A549 (cell line): ENCODE measurements at regions of chr4 and their contacts with region 1.

Region 1: DNA sequence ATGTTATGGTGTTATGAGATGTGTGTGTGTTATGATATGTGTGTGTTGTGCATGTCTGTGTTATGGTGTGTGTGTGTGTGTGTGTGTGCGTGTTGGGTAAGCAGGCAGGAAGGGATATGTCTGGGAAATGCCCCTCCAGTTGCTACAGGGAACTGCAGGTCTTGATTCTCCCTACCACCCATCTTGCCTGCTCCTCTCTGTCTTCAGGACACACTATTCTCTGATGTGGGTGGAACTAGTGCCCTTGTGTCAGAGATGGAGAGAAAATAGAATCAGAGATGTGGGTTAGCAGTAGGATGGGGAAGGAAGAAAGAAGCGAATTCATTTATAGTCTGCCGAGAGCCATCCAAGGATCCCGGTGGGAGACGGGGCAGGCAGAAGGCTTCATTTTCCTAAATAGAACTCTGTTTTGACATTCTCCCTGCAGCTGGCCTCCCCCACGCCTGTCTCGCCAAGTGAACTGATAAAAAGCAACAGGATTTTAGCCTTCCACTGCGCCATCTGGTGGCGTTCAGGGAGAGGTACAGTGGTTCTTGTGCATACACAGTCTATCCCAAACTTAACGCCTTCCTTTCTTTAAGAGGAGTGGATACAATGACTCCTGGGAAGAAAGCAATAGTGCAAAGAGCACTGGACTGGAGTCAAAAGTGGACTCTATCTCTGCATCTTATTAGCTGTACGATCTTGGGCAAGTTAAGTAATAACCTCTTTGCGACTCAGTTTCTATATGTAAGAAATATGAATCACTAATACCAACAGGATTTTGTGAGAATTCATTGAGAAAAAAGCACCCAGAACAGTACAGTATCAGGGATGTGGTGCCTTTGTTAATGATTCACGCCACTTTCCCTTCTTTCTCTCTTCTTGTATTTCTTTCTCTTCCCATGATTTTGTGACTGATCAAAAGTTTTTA is 14.1 kb upstream of the MGST2 start:
- DNase-seq: peak; percentile 44 to 84
- ATAC-seq: peak; percentile 82 to 85
- H3K4me3 ChIP-seq: no peak overlapping the region
- H3K27ac ChIP-seq: peak overlapping the region; percentile 63 to 81
- H3K4me1 ChIP-seq: peaks cover 29% of the 10 kb centered on the region
- CTCF ChIP-seq: peak; percentile 80
- EP300 ChIP-seq: no peak
- POLR2A ChIP-seq: no peak
- RAD21 ChIP-seq: peak; percentile 75 to 79

Region 2: DNA sequence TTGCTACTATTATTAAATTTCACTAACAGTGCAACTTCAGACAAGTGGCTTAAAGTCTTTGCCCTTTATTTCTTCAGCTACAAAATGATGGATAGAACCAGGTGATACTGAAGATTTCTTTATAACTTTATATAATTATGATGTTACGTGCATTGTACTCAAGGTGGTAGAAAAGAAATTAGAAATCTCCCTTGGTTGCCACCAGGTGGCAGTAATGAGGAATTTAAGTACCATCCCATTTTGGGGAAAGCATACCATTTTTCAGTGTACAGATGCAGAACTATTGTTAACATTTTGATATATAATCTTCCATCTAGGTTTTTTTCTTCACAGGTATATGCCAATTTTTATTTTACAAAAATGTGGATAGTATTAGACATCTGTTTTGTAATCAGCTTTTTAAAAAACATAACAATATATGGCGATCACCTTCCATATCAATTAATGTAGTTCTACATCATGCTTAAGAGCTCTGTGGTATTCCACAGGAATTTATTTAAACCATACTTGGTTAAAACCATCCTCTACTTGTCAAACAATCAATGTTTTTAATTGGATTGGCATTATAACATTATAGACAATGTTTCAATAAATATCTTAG is 235.4 kb before region 1 on chr4:
- CTCF ChIA-PET with region 1: no interaction called
- POLR2A ChIA-PET with region 1: no interaction called
- DNase-seq: peak in 1 of 2 experiments; percentile 51
- ATAC-seq: peak in 1 of 2 experiments; percentile 66; a peak in 4 of 6 replicates
- H3K4me3 ChIP-seq: no peak overlapping the region
- H3K27ac ChIP-seq: no peak overlapping the region
- H3K4me1 ChIP-seq: no peaks in the 10 kb centered on the region
- CTCF ChIP-seq: peak; percentile 62
- EP300 ChIP-seq: no peak
- POLR2A ChIP-seq: no peak
- RAD21 ChIP-seq: peak; percentile 30 to 47; a peak in 4 of 5 replicates

Region 3: GRCh38 chr4:139609647-139610046 is 41.9 kb before region 1 on chr4:
- CTCF ChIA-PET with region 1: interaction called, 260 read pairs
- POLR2A ChIA-PET with region 1: no interaction called
- DNase-seq: peak in 1 of 2 experiments; percentile 53
- ATAC-seq: peak; percentile 57 to 73; a peak in 4 of 6 replicates
- H3K4me3 ChIP-seq: no peak overlapping the region
- H3K27ac ChIP-seq: peak overlapping the region; percentile 94
- H3K4me1 ChIP-seq: peaks cover 49% of the 10 kb centered on the region
- CTCF ChIP-seq: no peak
- EP300 ChIP-seq: no peak
- POLR2A ChIP-seq: no peak
- RAD21 ChIP-seq: no peak

Region 4: GRCh38 chr4:139619644-139620043 is 31.9 kb before region 1 on chr4:
- CTCF ChIA-PET with region 1: interaction called, 23 read pairs
- POLR2A ChIA-PET with region 1: no interaction called
- DNase-seq: peak in 1 of 2 experiments; percentile 55
- ATAC-seq: peak; percentile 62 to 92; a peak in 4 of 6 replicates
- H3K4me3 ChIP-seq: no peak overlapping the region
- H3K27ac ChIP-seq: no peak overlapping the region
- H3K4me1 ChIP-seq: no peaks in the 10 kb centered on the region
- CTCF ChIP-seq: peak; percentile 39
- EP300 ChIP-seq: no peak
- POLR2A ChIP-seq: no peak
- RAD21 ChIP-seq: peak; percentile 32 to 50

Region 5: GRCh38 chr4:139628184-139629012 is 23.1 kb before region 1 on chr4:
- CTCF ChIA-PET with region 1: interaction called, 16 read pairs
- POLR2A ChIA-PET with region 1: no interaction called
- DNase-seq: no peak
- ATAC-seq: no peak
- H3K4me3 ChIP-seq: no peak overlapping the region
- H3K27ac ChIP-seq: no peak overlapping the region
- H3K4me1 ChIP-seq: no peaks in the 10 kb centered on the region
- CTCF ChIP-seq: no peak
- EP300 ChIP-seq: no peak
- POLR2A ChIP-seq: no peak
- RAD21 ChIP-seq: no peak

Region 6: GRCh38 chr4:139633661-139634060 is 17.9 kb before region 1 on chr4:
- CTCF ChIA-PET with region 1: interaction called, 39 read pairs
- POLR2A ChIA-PET with region 1: no interaction called
- DNase-seq: peak; percentile 17 to 42
- ATAC-seq: peak; percentile 78 to 93
- H3K4me3 ChIP-seq: 0 out of 3 replicates have a peak overlapping the region, but pooled peaks have one; percentile 6
- H3K27ac ChIP-seq: peak overlapping the region; percentile 37 to 77
- H3K4me1 ChIP-seq: peaks cover 15% of the 10 kb centered on the region
- CTCF ChIP-seq: peak; percentile 58
- EP300 ChIP-seq: no peak
- POLR2A ChIP-seq: no peak
- RAD21 ChIP-seq: peak; percentile 82 to 83

Region 7: DNA sequence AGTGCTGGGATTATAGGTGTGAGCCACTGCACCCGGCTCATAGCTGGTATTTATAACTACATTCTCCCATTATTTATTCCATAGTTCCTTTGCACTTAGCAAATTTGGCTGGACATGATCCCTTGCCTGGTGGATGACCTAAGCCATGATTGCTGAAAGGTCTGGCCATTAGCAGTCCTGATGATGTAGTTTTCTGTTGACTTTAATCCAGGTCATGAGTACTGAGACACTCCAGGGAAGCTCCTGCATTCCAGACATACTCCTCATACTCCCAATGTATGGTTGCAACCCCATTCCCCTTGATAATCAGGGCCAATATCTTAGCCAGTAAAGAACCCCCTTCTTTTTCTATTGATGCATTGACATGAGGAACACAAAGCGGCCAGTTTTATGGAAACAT is 10.3 kb before region 1 on chr4:
- CTCF ChIA-PET with region 1: interaction called, 39 read pairs
- POLR2A ChIA-PET with region 1: no interaction called
- DNase-seq: peak; percentile 47 to 83
- ATAC-seq: peak; percentile 91 to 96
- H3K4me3 ChIP-seq: no peak overlapping the region
- H3K27ac ChIP-seq: peak overlapping the region; percentile 82 to 87
- H3K4me1 ChIP-seq: peaks cover 62% of the 10 kb centered on the region
- CTCF ChIP-seq: no peak
- EP300 ChIP-seq: peak; percentile 62 to 63; a peak in 2 of 5 replicates
- POLR2A ChIP-seq: no peak
- RAD21 ChIP-seq: no peak

Region 8: GRCh38 chr4:139665690-139666529 is 14.4 kb after region 1 on chr4 and contains the start of gene MGST2:
- CTCF ChIA-PET with region 1: interaction called, 26 read pairs
- POLR2A ChIA-PET with region 1: interaction called, 4 read pairs
- DNase-seq: peak; percentile 62 to 66
- ATAC-seq: peak; percentile 91 to 93
- H3K4me3 ChIP-seq: peak within 1 kb of the TSS; percentile 57
- H3K27ac ChIP-seq: peak within 1 kb of the TSS; percentile 84 to 96
- H3K4me1 ChIP-seq: peaks cover 12% of the 10 kb centered on the region
- CTCF ChIP-seq: no peak
- EP300 ChIP-seq: no peak
- POLR2A ChIP-seq: peak; percentile 39; the same call in 1 of the 2 replicates
- RAD21 ChIP-seq: no peak
- polyA plus RNA-seq, gene MGST2: 61.1 and 62.1 TPM in 2 replicates